Mucosa of descending colon (tissue), 3 donors: ENCODE measurements at regions of chr10 and their contacts with region 1.

Region 1: GRCh38 chr10:28663576-28664313 is 13.6 kb upstream of the BAMBI start:
- DNase-seq: peak; percentile 61 to 82 (median 75)
- ATAC-seq: peak; percentile 92
- H3K4me3 ChIP-seq: no peak overlapping the region
- H3K4me1 ChIP-seq: peaks cover 7% of the 10 kb centered on the region
- CTCF ChIP-seq: peak; percentile 90

Region 2: DNA sequence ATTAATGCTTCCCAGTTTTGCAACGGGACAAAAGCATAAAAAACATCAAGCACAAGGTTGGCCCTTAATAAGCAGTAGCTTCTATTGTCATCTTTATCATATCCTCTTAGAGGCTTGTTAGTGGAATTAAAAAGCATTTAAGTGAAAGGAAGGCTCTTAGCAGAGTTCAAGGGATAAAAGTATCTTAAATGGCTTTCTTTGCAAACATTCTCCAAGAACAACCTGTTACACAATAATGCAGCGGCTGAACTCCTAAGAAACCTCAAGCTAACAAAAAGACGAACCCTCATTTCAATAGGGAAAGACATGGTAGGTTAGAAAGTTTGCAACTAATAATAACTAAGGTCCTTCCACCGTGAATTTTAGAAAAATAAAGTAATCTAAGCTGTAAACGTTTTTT is 442.9 kb before region 1 on chr10:
- intact Hi-C with region 1: no loop called
- DNase-seq: no peak
- ATAC-seq: no peak
- H3K4me3 ChIP-seq: no peak overlapping the region
- H3K4me1 ChIP-seq: no peaks in the 10 kb centered on the region
- CTCF ChIP-seq: no peak

Region 3: GRCh38 chr10:28577506-28577905 is 86.2 kb before region 1 on chr10:
- intact Hi-C with region 1: no loop called
- DNase-seq: no peak
- ATAC-seq: no peak
- H3K4me3 ChIP-seq: no peak overlapping the region
- H3K4me1 ChIP-seq: peaks cover 37% of the 10 kb centered on the region
- CTCF ChIP-seq: no peak

Region 4: GRCh38 chr10:28704464-28705161 is 40.9 kb after region 1 on chr10:
- intact Hi-C with region 1: no loop called
- DNase-seq: no peak
- ATAC-seq: no peak
- H3K4me3 ChIP-seq: no peak overlapping the region
- H3K4me1 ChIP-seq: no peaks in the 10 kb centered on the region
- CTCF ChIP-seq: no peak

Region 5: DNA sequence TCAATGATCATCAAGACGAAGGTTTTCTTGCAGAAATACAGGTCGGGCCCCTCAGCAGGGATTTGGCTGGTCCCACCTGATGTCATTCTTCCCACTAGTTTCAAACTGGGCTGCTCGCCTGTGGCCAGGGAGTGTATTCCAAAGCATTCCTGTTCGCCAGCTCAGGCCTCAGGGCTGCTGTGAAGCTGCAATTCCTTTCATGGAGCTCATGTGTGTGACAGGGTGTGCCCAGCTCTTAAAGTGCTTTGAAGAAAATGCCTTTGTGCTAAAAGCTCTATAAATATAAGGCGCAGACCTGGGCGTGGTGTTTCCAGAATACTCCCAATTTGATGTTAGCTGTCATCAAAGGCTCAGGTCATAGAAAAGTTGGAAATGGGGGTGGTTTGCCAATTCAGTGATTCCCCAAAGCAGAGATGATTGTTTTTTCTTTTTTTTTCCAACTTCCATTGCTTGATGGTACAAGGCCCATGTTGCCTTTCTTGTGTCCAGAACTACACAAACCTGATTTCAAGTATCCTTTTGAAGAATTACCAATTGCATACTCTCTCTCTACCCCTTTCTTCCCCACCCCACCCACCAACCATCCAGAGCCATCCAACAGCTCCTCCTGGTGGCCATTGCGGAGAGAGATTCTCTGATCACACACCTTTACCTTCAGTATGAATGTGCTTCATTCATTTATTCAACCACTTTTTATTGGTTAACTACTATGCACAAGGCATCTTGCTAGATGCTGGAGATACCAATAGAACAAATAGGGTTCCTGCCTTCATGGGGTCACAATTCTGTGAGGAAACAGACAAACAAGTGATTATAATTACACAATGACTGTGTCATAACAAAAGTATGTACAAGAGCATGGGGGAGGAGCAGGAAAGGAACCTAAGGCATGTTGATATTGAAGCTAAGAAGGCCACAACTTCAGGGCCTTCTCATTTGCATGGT is 327.9 kb after region 1 on chr10:
- intact Hi-C with region 1: loop called (anchors 5 to 10 kb)
- DNase-seq: peak in 2 of 3 donors; percentile 47 to 62
- ATAC-seq: peak; percentile 79
- H3K4me3 ChIP-seq: no peak overlapping the region
- H3K4me1 ChIP-seq: no peaks in the 10 kb centered on the region
- CTCF ChIP-seq: peak; percentile 45

Region 6: DNA sequence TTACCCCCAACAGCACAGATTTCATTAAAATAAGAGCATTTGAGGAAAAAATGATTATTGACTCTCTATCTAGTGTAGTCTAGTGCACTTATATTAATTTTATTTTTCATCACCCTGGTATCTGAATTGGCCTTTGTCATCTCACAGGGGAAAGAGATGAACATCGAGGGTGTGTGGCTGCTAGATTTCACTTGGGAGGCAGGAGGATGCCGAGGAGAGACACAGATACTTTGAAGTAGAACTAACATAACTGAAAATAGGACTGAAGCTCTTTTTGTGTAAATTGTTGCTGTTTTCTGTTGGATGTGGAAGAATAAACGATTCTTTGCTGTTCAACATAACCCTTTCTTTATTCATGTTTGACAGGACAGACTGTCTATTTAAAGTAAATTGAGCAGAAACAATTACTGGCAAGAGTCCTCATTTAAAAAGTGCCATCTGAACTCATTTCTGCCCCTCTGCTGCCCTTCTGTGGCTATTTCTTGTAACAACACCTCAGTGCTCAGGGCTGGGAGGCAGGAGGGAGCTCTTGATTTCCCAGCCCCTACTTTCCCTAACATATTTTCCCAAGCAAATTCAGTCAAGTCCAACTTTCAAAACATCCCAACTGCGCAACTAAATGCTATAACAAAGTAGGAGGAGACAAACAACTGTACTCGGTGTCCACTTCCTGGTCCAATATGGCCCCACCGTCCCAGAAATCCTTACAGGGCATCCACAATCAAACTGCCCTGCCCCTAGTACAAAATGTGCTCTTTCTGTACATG is 640.7 kb after region 1 on chr10:
- intact Hi-C with region 1: loop called (anchors 10 kb)
- DNase-seq: peak in 2 of 3 donors; percentile 30 to 60
- ATAC-seq: peak; percentile 60
- H3K4me3 ChIP-seq: no peak overlapping the region
- H3K4me1 ChIP-seq: no peaks in the 10 kb centered on the region
- CTCF ChIP-seq: no peak